Naive thymus-derived CD4-positive, alpha-beta T cell (primary cell): ENCODE measurements at regions of chr7 and their contacts with region 1.

Region 1: DNA sequence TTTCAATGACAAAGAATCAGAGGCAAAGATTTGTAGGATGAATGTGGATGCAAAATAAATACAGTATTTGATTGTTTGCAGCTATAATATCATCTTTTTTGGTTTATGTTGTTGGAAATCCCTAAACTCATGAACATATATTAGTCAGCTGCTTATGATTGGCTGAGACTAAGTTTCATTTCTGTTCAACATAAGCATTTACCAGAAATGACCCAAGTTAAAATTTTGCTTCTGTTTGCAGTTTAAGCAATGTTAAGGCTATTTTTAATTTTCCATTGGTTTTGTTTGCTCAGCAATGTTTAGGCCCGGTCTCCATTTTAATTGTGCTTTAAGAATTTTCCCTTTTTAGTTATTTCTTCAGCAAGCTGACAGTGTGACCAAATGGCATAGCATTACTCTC is 22.0 kb downstream of the GIMAP6 start:
- DNase-seq: no peak
- ATAC-seq: no peak
- H3K4me3 ChIP-seq: no peak overlapping the region
- H3K4me3 Mint-ChIP-seq: peak overlapping the region in 1 of 10 donors; percentile 7
- H3K27ac ChIP-seq: no peak overlapping the region
- H3K27ac Mint-ChIP-seq: peak overlapping the region in 5 of 9 donors; percentile 65 to 91 (median 80)
- H3K4me1 ChIP-seq: peaks cover 14 to 36% of the 10 kb centered on the region in 2 donors
- H3K4me1 Mint-ChIP-seq: peaks cover 46 to 90% (median 75%) of the 10 kb centered on the region in 7 donors
- H3K27me3 ChIP-seq: no peaks in the 10 kb centered on the region
- H3K27me3 Mint-ChIP-seq: no peaks in the 10 kb centered on the region

Region 2: GRCh38 chr7:150620617-150621371 is 10.6 kb after region 1 on chr7:
- CTCF ChIA-PET with region 1: no interaction called
- POLR2A ChIA-PET with region 1: interaction called, 15 read pairs
- intact Hi-C with region 1: no loop called
- DNase-seq: no peak
- ATAC-seq: no peak
- H3K4me3 ChIP-seq: no peak overlapping the region
- H3K4me3 Mint-ChIP-seq: peak overlapping the region; percentile 27 to 73 (median 54)
- H3K27ac ChIP-seq: peak overlapping the region; percentile 60
- H3K27ac Mint-ChIP-seq: peak overlapping the region; percentile 64 to 97 (median 88)
- H3K4me1 ChIP-seq: peaks cover 0 to 25% of the 10 kb centered on the region in 2 donors
- H3K4me1 Mint-ChIP-seq: peaks cover 25 to 84% (median 68%) of the 10 kb centered on the region in 7 donors
- H3K27me3 ChIP-seq: no peaks in the 10 kb centered on the region
- H3K27me3 Mint-ChIP-seq: no peaks in the 10 kb centered on the region

Region 3: GRCh38 chr7:150626696-150627095 is 16.5 kb after region 1 on chr7:
- CTCF ChIA-PET with region 1: interaction called, 4 read pairs
- POLR2A ChIA-PET with region 1: interaction called, 15 read pairs
- intact Hi-C with region 1: loop called (anchors 2 kb)
- DNase-seq: no peak
- ATAC-seq: no peak
- H3K4me3 ChIP-seq: no peak overlapping the region
- H3K4me3 Mint-ChIP-seq: peak overlapping the region in 8 of 10 donors; percentile 33 to 94 (median 57)
- H3K27ac ChIP-seq: peak overlapping the region; percentile 49
- H3K27ac Mint-ChIP-seq: peak overlapping the region; percentile 33 to 97 (median 83)
- H3K4me1 ChIP-seq: peaks cover 35 to 45% of the 10 kb centered on the region in 2 donors
- H3K4me1 Mint-ChIP-seq: peaks cover 40 to 88% (median 81%) of the 10 kb centered on the region in 7 donors
- H3K27me3 ChIP-seq: no peaks in the 10 kb centered on the region
- H3K27me3 Mint-ChIP-seq: no peaks in the 10 kb centered on the region